Activated B cell treated with CpG ODN at 0.5 μM for 24 hours (primary cell): ENCODE measurements at regions of chr5 and their contacts with region 1.

Region 1: DNA sequence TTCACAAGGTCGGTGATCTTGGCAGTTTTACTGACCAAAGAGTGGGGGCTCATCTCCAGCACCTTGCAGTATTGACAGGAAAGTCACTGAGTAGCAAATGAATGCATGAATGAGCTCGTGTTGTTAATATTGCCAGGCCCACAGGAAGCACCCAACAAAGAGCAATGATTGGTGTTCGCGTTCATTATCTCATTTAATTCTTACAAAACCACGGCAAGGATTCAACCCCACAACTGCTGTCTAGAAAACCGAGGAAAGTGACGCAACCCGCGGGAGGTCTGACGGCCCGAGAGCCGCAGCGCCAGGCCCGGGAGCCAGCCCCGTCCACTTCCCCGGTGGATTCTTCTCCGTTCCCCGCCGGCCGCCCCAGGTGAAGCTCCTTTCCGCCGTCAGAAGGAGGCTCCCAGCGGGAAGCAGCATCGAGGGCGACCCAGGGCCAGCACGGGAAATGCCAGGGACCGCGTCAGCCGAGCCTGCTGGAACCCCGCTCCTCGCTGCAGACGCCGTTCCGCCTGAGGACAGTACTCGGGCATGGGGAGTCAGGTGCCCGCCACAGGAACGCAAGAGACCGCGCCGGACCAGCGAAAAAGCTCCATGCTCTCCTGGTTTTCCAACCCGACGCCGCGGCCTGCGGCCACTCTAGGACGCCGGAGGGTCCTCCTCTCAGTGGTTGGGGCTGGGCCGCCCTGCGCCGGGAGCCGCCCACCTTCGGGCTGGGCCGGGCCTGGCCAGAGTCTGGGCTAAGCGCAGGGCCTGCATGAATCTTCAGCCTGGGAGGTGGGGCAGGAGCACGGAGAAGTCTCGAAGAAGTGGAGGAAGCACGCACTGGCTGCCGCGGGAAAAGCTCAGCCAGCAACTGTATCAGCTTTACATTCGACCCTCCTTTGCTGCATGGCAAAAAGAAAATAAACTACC is 19.8 kb upstream of the FER start:
- DNase-seq: peak; percentile 62
- ATAC-seq: peak; percentile 84
- H3K4me3 Mint-ChIP-seq: peak overlapping the region; percentile 85
- H3K27ac Mint-ChIP-seq: peak overlapping the region; percentile 96
- H3K4me1 Mint-ChIP-seq: peaks cover 50% of the 10 kb centered on the region
- H3K27me3 Mint-ChIP-seq: no peaks in the 10 kb centered on the region
- CTCF ChIP-seq: no peak

Region 2: DNA sequence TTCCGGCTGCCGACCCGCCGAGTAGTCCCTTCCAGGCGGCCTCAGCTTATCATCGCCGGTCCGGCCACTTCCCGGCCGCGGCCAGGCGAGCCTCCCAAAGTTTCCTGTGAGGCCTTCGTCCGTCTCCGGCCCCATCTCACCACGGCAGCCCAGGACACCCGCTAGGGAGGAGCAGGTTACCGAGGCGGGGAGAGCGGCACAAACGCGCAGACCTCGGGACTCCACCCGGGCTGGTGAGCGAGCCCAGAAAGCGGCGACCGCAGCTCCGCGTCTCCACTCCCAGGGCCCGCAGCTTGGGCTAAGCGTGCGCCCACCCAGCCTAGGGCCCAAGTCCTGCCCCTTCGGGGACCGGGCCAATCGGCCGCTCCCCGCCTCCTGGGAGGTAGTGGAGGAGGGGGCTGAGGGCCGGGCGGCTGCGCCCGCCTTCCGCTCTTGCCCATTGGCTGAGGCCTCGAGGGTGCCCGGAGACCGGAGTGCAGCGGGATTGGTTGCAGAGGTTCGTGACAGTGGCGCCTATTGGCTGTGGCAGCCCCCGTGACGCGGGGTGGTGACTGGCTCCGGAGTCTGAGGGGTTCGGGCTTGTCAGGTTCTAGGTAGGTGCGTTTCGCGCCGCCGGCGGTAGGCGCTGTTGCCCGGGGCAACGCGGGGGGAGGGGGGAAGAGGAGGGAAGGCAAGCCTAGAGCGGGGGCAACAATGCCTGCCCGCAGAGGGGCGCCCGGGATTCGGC is 20.7 kb after region 1 on chr5:
- CTCF ChIA-PET with region 1: no interaction called
- POLR2A ChIA-PET with region 1: interaction called, 71 read pairs
- intact Hi-C with region 1: loop called (anchors 1 kb)
- DNase-seq: peak; percentile 92
- ATAC-seq: peak; percentile 92
- H3K4me3 Mint-ChIP-seq: peak overlapping the region; percentile 92
- H3K27ac Mint-ChIP-seq: peak overlapping the region; percentile 94
- H3K4me1 Mint-ChIP-seq: peaks cover 22% of the 10 kb centered on the region
- H3K27me3 Mint-ChIP-seq: no peaks in the 10 kb centered on the region
- CTCF ChIP-seq: no peak

Region 3: DNA sequence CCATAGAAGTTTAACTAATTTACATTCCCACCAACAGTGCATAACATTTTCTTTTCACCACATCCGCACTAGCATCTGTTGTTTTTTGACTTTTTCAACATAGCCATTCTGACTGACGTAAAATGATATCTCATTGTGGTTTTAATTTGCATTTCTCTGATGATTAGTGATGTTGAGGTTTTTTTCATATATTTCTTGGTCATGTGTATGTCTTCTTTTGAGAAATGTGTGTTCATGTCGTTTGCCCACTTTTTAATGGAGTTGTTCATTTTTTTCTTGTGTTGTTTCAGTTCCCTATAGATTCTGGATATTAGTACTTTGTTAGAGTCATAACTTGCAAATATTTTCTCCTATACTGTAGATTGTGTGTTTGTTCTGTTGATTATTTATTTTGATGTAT is 183.1 kb after region 1 on chr5:
- CTCF ChIA-PET with region 1: no interaction called
- POLR2A ChIA-PET with region 1: no interaction called
- intact Hi-C with region 1: loop called (anchors 5 kb)
- DNase-seq: no peak
- ATAC-seq: peak; percentile 61
- H3K4me3 Mint-ChIP-seq: peak overlapping the region; percentile 17
- H3K27ac Mint-ChIP-seq: peak overlapping the region; percentile 86
- H3K4me1 Mint-ChIP-seq: peaks cover 14% of the 10 kb centered on the region
- H3K27me3 Mint-ChIP-seq: no peaks in the 10 kb centered on the region
- CTCF ChIP-seq: no peak

Region 4: GRCh38 chr5:109161914-109162683 is 434.2 kb after region 1 on chr5:
- CTCF ChIA-PET with region 1: no interaction called
- POLR2A ChIA-PET with region 1: interaction called, 8 read pairs
- intact Hi-C with region 1: loop called (anchors 5 kb)
- DNase-seq: no peak
- ATAC-seq: no peak
- H3K4me3 Mint-ChIP-seq: no peak overlapping the region
- H3K27ac Mint-ChIP-seq: peak overlapping the region; percentile 51
- H3K4me1 Mint-ChIP-seq: peaks cover 31% of the 10 kb centered on the region
- H3K27me3 Mint-ChIP-seq: no peaks in the 10 kb centered on the region
- CTCF ChIP-seq: no peak

Region 5: GRCh38 chr5:110371725-110372041 is 1643.8 kb after region 1 on chr5:
- CTCF ChIA-PET with region 1: no interaction called
- POLR2A ChIA-PET with region 1: no interaction called
- intact Hi-C with region 1: loop called (anchors 5 kb)
- DNase-seq: no peak
- ATAC-seq: peak; percentile 87
- H3K4me3 Mint-ChIP-seq: peak overlapping the region; percentile 55
- H3K27ac Mint-ChIP-seq: peak overlapping the region; percentile 20
- H3K4me1 Mint-ChIP-seq: peaks cover 22% of the 10 kb centered on the region
- H3K27me3 Mint-ChIP-seq: no peaks in the 10 kb centered on the region
- CTCF ChIP-seq: no peak